ENCODE measurements at regions of chr3 and their contacts with region 1.

Region 1: DNA sequence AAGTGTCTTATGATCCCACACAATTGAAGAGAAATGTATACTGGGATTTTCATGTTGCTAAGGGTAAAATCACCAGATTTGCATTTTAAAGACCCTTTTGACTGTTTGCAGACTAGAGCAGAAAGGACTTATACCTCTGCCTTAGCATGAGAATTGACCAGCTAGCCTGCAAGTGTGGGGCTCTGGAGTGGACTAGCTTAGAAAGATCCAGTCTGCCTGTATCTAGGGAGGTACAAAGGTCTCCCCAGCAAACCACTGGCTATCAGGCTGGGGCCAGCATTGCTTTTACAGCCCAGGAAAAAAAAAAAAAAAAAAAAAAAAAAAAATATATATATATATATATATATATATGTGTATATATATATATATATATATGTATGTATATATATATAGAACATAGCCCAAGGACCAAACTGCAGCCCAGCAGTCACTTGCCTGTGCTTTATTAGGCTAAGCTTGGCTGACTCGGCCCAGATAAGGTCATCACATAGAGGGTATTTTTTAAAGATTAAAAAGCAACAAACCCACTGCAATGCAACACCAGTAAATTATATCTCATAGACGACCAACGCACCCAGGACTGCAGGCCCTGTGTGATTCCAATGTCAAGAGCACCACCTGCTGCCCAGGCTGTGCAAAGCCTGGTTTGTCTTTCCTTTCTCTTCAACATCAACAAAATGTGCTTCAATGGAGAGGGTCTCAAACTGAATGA is 63.7 kb downstream of the DCLK3 start:
- DNase-seq: peak; percentile 71
- H3K4me3 Mint-ChIP-seq: no peak overlapping the region
- H3K27ac Mint-ChIP-seq: no peak overlapping the region
- H3K4me1 Mint-ChIP-seq: peaks cover 27% of the 10 kb centered on the region
- H3K27me3 Mint-ChIP-seq: no peaks in the 10 kb centered on the region
- CTCF ChIP-seq: peak; percentile 84

Region 2: GRCh38 chr3:36124118-36124796 is 576.4 kb before region 1 on chr3:
- CTCF ChIA-PET with region 1: interaction called, 66 read pairs
- POLR2A ChIA-PET with region 1: no interaction called
- intact Hi-C with region 1: loop called (anchors 1 kb)
- DNase-seq: peak; percentile 74
- H3K4me3 Mint-ChIP-seq: no peak overlapping the region
- H3K27ac Mint-ChIP-seq: no peak overlapping the region
- H3K4me1 Mint-ChIP-seq: no peaks in the 10 kb centered on the region
- H3K27me3 Mint-ChIP-seq: no peaks in the 10 kb centered on the region
- CTCF ChIP-seq: peak; percentile 87

Region 3: GRCh38 chr3:36362967-36363366 is 337.7 kb before region 1 on chr3:
- CTCF ChIA-PET with region 1: no interaction called
- POLR2A ChIA-PET with region 1: no interaction called
- intact Hi-C with region 1: loop called (anchors 10 kb)
- DNase-seq: peak; percentile 75
- H3K4me3 Mint-ChIP-seq: no peak overlapping the region
- H3K27ac Mint-ChIP-seq: peak overlapping the region; percentile 33
- H3K4me1 Mint-ChIP-seq: peaks cover 16% of the 10 kb centered on the region
- H3K27me3 Mint-ChIP-seq: no peaks in the 10 kb centered on the region
- CTCF ChIP-seq: no peak

Region 4: GRCh38 chr3:36540888-36541518 is 159.7 kb before region 1 on chr3:
- CTCF ChIA-PET with region 1: interaction called, 5 read pairs
- POLR2A ChIA-PET with region 1: no interaction called
- intact Hi-C with region 1: loop called (anchors 1 kb)
- DNase-seq: peak; percentile 50
- H3K4me3 Mint-ChIP-seq: no peak overlapping the region
- H3K27ac Mint-ChIP-seq: no peak overlapping the region
- H3K4me1 Mint-ChIP-seq: no peaks in the 10 kb centered on the region
- H3K27me3 Mint-ChIP-seq: no peaks in the 10 kb centered on the region
- CTCF ChIP-seq: peak; percentile 91

Region 5: DNA sequence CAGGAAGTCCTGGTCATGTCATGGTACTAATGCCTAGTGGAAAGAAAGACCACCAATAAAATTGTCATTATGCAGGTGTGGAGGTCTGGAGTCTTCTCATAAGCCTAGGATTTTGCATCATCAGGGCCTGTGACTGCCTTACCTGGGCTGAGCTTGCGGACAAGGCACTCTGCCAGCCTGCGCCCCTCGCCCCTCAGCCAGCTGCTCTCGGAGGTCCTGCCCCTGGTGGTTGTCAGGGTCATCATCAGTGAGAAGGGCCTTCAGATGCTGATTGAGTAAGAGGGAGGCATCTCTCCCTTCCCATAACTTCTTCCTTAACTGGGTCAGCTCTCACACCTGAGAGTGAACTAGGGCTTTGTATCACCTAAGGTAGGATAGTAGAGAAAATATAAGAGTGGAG is 69.1 kb before region 1 on chr3:
- CTCF ChIA-PET with region 1: no interaction called
- POLR2A ChIA-PET with region 1: no interaction called
- intact Hi-C with region 1: loop called (anchors 2 kb)
- DNase-seq: no peak
- H3K4me3 Mint-ChIP-seq: no peak overlapping the region
- H3K27ac Mint-ChIP-seq: no peak overlapping the region
- H3K4me1 Mint-ChIP-seq: no peaks in the 10 kb centered on the region
- H3K27me3 Mint-ChIP-seq: no peaks in the 10 kb centered on the region
- CTCF ChIP-seq: no peak

Region 6: DNA sequence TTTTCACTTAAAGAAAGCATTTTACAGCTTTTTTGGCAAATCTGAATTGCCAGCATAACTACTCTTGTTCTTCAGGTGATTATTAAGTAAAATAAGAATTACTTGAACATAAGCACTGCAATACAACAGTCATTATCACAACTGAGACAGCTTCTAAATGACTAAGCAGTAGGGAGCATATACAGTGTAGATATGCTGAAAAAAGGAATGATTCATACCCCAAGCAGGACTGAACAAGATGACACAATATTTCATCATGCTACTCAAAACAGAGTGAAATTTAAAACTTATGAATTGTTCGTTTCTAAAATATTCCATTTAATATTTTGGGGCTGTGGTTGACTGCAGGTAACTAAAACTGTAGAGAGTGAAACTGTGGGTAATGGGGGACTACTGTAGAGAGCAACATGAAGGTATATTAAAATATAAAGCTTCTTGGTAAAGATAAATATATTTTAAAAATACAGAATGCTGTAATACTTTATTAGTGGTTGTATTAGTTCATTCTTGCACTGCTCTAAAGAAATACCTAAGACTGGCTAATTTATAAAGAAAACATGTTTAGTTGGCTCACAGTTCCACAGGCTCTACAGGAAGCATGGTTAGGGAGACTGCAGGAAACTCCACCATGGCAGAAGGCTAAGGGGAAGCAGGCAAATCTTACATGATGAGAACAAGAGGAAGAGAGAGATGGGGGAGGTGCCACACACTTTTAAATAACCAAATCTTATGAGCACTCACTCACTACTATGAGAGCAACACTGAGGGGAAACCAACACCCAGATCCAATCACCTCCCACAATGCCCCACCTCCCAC is 21.1 kb before region 1 on chr3:
- CTCF ChIA-PET with region 1: interaction called, 5 read pairs
- POLR2A ChIA-PET with region 1: interaction called, 7 read pairs
- intact Hi-C with region 1: loop called (anchors 1 kb)
- DNase-seq: peak; percentile 80
- H3K4me3 Mint-ChIP-seq: peak overlapping the region; percentile 41
- H3K27ac Mint-ChIP-seq: peak overlapping the region; percentile 99
- H3K4me1 Mint-ChIP-seq: peaks cover 34% of the 10 kb centered on the region
- H3K27me3 Mint-ChIP-seq: no peaks in the 10 kb centered on the region
- CTCF ChIP-seq: no peak